ENCODE measurements at regions of chr5 and their contacts with region 1.

Region 1: GRCh38 chr5:1523771-1524480 is at the start of gene LPCAT1:
- DNase-seq: peak; percentile 91
- ATAC-seq: peak; percentile 82
- H3K4me3 Mint-ChIP-seq: peak within 1 kb of the TSS; percentile 91
- H3K27ac Mint-ChIP-seq: peak within 1 kb of the TSS; percentile 87
- H3K4me1 Mint-ChIP-seq: peaks cover 57% of the 10 kb centered on the region
- H3K27me3 Mint-ChIP-seq: no peaks in the 10 kb centered on the region
- CTCF ChIP-seq: no peak
- total RNA-seq, gene LPCAT1: 246 and 269 TPM in 2 replicates

Region 2: DNA sequence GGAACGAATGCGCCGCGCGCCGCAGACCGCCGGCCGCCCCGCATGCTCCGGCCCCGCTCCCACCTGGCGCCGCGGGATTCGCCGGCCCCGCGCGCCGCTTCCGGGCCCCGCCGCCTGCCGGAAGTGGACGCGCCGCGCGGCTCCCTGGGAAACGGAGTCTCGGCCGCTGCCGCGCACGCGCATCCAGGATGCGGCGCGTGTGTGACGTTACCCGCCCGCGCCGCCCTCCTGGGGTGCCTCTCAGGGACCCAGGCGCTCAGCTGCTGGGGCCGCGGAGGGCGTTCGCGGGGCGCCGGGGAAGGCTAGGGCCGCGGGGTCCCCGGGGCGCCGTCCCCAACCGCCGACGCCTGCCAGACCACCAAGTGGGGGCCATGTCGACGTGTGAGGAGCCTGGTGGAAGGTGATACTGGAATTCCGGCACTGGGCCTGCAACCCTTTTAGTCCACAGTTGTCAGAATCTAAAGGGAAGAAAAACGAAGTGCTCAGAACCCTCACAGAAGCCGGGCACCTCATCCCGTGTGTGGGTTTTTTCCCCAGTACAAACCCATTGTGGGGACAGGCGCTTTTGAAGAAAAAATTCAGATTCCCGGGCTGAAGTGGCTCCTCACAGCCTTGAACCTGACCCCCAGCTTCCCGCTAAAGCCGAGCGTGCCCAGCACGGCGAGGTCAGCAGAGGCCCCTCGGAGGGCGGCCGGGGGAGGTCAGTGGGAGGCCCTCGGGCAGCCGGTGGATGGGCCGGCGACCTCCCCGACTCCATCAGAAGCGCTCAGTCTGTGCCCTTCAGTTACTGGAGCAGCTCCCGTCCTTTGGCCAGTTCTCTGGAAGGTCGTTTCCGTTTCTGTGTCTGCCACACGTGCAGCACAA is 178.7 kb before region 1 on chr5 and contains the start of gene CLPTM1L:
- CTCF ChIA-PET with region 1: no interaction called
- POLR2A ChIA-PET with region 1: no interaction called
- intact Hi-C with region 1: loop called (anchors 10 kb)
- DNase-seq: peak; percentile 92
- ATAC-seq: peak; percentile 94
- H3K4me3 Mint-ChIP-seq: peak within 1 kb of the TSS; percentile 88
- H3K27ac Mint-ChIP-seq: peak within 1 kb of the TSS; percentile 80
- H3K4me1 Mint-ChIP-seq: peaks cover 37% of the 10 kb centered on the region
- H3K27me3 Mint-ChIP-seq: no peaks in the 10 kb centered on the region
- CTCF ChIP-seq: no peak
- total RNA-seq, gene CLPTM1L: 87.5 and 100 TPM in 2 replicates

Region 3: DNA sequence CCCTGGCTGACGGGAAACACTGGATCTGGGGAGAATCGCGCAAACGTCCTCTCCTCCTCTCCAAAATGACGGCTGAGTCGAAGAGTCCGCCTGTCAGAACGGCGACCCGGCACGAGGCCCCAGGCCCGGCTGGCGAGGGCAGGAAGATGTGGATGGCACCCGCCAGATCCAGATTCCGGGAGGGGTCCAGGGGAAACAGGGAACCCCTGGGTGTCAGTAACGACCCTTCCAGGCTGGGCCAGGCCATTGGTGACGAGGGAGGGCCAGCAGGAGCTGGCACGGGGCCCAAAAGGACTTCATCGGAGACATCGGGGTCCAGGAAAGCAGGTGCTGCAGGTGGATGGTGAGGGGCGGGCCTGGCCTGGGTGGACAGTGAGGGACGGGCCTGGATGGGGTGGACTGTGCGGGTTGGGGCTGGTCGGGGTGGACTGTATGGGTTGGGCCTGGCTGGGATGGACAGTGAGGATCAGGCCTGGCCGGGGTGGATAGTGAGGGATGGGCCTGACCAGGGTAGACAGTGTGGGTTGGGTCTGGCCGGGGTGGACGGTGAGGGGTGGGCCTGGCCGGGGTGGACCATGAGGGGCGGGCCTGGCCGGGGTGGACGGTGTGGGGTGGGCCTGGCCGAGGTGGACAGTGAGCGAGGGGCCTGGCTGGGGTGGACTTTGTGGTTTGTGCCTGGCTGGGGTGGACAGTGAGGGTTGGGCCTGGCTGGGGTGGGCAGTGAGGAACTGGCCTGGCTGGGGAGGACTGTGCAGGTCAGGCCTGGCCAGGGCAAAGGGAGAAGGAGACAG is 92.7 kb before region 1 on chr5:
- CTCF ChIA-PET with region 1: no interaction called
- POLR2A ChIA-PET with region 1: no interaction called
- intact Hi-C with region 1: no loop called
- DNase-seq: no peak
- ATAC-seq: no peak
- H3K4me3 Mint-ChIP-seq: no peak overlapping the region
- H3K27ac Mint-ChIP-seq: no peak overlapping the region
- H3K4me1 Mint-ChIP-seq: no peaks in the 10 kb centered on the region
- H3K27me3 Mint-ChIP-seq: peaks cover 7% of the 10 kb centered on the region
- CTCF ChIP-seq: no peak

Region 4: DNA sequence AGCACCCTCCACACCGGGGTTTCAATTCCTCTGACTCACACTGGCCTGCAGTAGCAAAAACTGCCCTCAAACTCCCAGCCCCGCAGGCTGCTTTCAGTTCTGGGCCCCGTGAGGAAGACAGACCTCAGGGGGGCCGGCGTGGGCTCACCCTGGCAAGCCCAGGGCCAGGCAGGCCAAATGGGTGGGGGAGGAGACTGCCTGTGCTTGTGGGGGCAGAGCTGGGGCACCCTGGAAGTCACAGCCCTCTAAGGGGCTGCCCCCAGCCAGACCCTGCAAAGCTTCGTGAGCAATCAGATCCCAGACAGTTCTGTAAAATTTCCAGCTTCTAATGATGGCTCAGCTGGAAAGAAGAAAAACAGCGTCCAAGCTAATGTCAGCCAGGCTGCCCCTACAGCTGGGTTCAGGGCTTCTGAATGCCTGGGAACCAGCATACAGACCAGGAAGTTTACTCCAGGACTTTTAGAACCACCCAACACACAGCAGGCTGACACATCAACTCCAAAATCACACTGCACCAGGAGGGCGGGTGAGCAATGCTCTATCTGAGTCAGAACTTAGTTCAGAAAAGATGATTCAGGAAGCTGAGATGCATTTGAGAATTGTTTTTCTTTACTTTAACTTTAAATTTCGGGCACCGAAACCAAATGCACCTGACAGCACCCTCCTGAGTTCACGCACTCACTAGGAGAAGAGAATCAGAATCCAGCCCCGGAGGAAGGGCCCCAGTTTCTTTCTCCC is 34.8 kb before region 1 on chr5:
- CTCF ChIA-PET with region 1: no interaction called
- POLR2A ChIA-PET with region 1: interaction called, 68 read pairs
- intact Hi-C with region 1: loop called (anchors 1 kb)
- DNase-seq: peak; percentile 62
- ATAC-seq: peak; percentile 51
- H3K4me3 Mint-ChIP-seq: peak overlapping the region; percentile 78
- H3K27ac Mint-ChIP-seq: peak overlapping the region; percentile 83
- H3K4me1 Mint-ChIP-seq: peaks cover 100% of the 10 kb centered on the region
- H3K27me3 Mint-ChIP-seq: no peaks in the 10 kb centered on the region
- CTCF ChIP-seq: no peak

Region 5: GRCh38 chr5:1503241-1504068 is 20.5 kb before region 1 on chr5:
- CTCF ChIA-PET with region 1: interaction called, 3 read pairs
- POLR2A ChIA-PET with region 1: interaction called, 35 read pairs
- intact Hi-C with region 1: no loop called
- DNase-seq: peak; percentile 43
- ATAC-seq: peak; percentile 38
- H3K4me3 Mint-ChIP-seq: peak overlapping the region; percentile 80
- H3K27ac Mint-ChIP-seq: peak overlapping the region; percentile 99
- H3K4me1 Mint-ChIP-seq: peaks cover 93% of the 10 kb centered on the region
- H3K27me3 Mint-ChIP-seq: no peaks in the 10 kb centered on the region
- CTCF ChIP-seq: no peak

Region 6: GRCh38 chr5:1594357-1595106 is 70.6 kb after region 1 on chr5:
- CTCF ChIA-PET with region 1: no interaction called
- POLR2A ChIA-PET with region 1: interaction called, 4 read pairs
- intact Hi-C with region 1: loop called (anchors 1 kb)
- DNase-seq: peak; percentile 81
- ATAC-seq: peak; percentile 94
- H3K4me3 Mint-ChIP-seq: peak overlapping the region; percentile 82
- H3K27ac Mint-ChIP-seq: peak overlapping the region; percentile 56
- H3K4me1 Mint-ChIP-seq: peaks cover 19% of the 10 kb centered on the region
- H3K27me3 Mint-ChIP-seq: no peaks in the 10 kb centered on the region
- CTCF ChIP-seq: no peak

Region 7: DNA sequence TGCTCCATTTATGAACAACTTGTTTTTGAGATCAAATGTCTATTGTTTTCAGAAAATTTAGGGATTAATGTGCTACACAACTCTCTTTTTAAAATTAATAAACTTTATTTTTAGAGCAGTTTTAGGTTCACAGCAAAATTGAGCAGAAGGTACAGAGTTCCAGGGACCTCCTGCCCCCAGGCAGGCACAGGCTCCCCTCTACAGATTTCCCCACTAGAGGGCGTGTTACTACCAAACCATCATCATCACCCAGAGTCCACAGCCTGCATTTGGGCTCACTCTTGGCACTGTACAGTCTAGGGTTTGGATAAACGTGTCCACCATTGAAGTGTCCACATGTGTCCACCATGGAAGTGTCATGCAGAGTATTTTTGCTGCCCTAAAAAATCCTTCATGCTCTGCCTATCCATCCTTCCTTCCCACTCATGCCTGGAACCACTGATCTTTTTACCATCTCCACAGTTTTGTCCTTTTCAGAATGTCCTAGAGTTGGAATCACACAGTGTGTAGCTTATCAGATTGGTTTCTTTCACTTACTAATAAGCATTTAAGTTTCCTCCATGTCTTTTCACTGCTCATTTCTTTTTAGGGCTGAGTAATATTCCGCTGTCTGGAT is 214.0 kb after region 1 on chr5:
- CTCF ChIA-PET with region 1: no interaction called
- POLR2A ChIA-PET with region 1: no interaction called
- intact Hi-C with region 1: no loop called
- DNase-seq: no peak
- ATAC-seq: peak; percentile 56
- H3K4me3 Mint-ChIP-seq: no peak overlapping the region
- H3K27ac Mint-ChIP-seq: no peak overlapping the region
- H3K4me1 Mint-ChIP-seq: no peaks in the 10 kb centered on the region
- H3K27me3 Mint-ChIP-seq: peaks cover 8% of the 10 kb centered on the region
- CTCF ChIP-seq: no peak

Region 8: GRCh38 chr5:2453781-2454180 is 929.9 kb after region 1 on chr5:
- CTCF ChIA-PET with region 1: no interaction called
- POLR2A ChIA-PET with region 1: no interaction called
- intact Hi-C with region 1: no loop called
- DNase-seq: no peak
- ATAC-seq: no peak
- H3K4me3 Mint-ChIP-seq: no peak overlapping the region
- H3K27ac Mint-ChIP-seq: no peak overlapping the region
- H3K4me1 Mint-ChIP-seq: no peaks in the 10 kb centered on the region
- H3K27me3 Mint-ChIP-seq: no peaks in the 10 kb centered on the region
- CTCF ChIP-seq: no peak